ENCODE measurements at regions of chr7 and their contacts with region 1.

Region 1: GRCh38 chr7:100705753-100706671 is at the start of gene POP7:
- DNase-seq: peak; percentile 90
- ATAC-seq: peak; percentile 98
- H3K4me3 ChIP-seq: peak within 1 kb of the TSS; percentile 97
- H3K27ac ChIP-seq: peak within 1 kb of the TSS; percentile 93
- H3K4me1 ChIP-seq: peaks cover 13% of the 10 kb centered on the region
- H3K27me3 ChIP-seq: no peaks in the 10 kb centered on the region
- CTCF ChIP-seq: no peak
- EP300 ChIP-seq: no peak
- POLR2A ChIP-seq: peak; percentile 89
- RAD21 ChIP-seq: no peak
- polyA plus RNA-seq, gene POP7: 12.1 to 37.9 TPM

Region 2: GRCh38 chr7:100563809-100564400 is 142.1 kb before region 1 on chr7:
- CTCF ChIA-PET with region 1: interaction called, 13 read pairs
- POLR2A ChIA-PET with region 1: no interaction called
- RAD21 ChIA-PET with region 1: interaction called, 4 read pairs
- SMC1A ChIA-PET with region 1: interaction called, 4 read pairs
- in situ Hi-C with region 1: no loop called
- intact Hi-C with region 1: no loop called
- DNase-seq: no peak
- ATAC-seq: peak; percentile 84
- H3K4me3 ChIP-seq: no peak overlapping the region
- H3K27ac ChIP-seq: no peak overlapping the region
- H3K4me1 ChIP-seq: peaks cover 8% of the 10 kb centered on the region
- H3K27me3 ChIP-seq: no peaks in the 10 kb centered on the region
- CTCF ChIP-seq: peak; percentile 94 to 98 (median 97)
- EP300 ChIP-seq: no peak
- POLR2A ChIP-seq: peak; percentile 35
- RAD21 ChIP-seq: peak; percentile 71

Region 3: DNA sequence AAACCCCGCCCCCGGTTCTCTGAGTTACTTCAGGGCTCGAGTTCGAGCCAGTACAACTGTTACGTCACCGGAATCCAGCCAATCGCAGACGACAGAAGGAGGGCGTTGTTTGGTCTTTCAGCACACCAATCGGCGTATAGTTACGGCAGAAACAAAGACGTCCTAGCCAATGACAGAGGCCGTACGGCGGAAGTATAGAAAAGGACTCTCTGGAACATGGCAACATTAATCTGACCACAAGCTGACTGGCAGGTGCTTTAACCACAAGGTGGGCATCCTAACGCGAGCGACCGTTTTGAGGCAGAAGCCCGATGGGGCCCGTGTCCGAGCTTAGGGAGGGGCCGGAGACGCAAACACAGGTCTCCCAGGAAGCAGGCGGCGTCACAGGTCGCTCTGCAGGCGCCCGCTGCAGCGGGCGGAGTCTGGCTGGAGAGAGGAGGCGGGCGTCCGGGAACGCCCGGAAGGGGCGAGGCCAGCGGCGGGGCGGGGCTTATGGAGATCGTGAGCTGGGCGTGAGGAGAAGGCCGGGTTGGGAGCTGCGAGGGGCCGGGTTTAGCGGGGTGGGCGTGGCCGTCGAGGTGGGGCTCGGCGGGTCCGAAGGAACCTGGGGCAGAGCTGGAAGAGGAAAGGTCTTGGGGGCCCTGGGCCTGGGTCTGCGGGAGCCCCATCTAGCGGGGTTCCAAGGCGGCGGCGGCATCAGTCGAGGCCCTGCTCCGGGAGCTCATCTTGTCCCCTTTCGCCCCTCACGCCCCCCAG is 93.9 kb before region 1 on chr7 and contains the start of gene MOSPD3:
- CTCF ChIA-PET with region 1: interaction called, 16 read pairs
- POLR2A ChIA-PET with region 1: interaction called, 5 read pairs
- RAD21 ChIA-PET with region 1: interaction called, 15 read pairs
- SMC1A ChIA-PET with region 1: interaction called, 8 read pairs
- in situ Hi-C with region 1: no loop called
- intact Hi-C with region 1: no loop called
- DNase-seq: peak; percentile 99
- ATAC-seq: peak; percentile 98
- H3K4me3 ChIP-seq: peak within 1 kb of the TSS; percentile 75
- H3K27ac ChIP-seq: peak within 1 kb of the TSS; percentile 97
- H3K4me1 ChIP-seq: peaks cover 5% of the 10 kb centered on the region
- H3K27me3 ChIP-seq: peaks cover 0 to 3% of the 10 kb centered on the region in 2 experiments; a peak in 2 of 4 replicates
- CTCF ChIP-seq: no peak
- EP300 ChIP-seq: no peak
- POLR2A ChIP-seq: peak; percentile 90
- RAD21 ChIP-seq: no peak
- polyA plus RNA-seq, gene MOSPD3: 0.61 to 1.2 TPM

Region 4: DNA sequence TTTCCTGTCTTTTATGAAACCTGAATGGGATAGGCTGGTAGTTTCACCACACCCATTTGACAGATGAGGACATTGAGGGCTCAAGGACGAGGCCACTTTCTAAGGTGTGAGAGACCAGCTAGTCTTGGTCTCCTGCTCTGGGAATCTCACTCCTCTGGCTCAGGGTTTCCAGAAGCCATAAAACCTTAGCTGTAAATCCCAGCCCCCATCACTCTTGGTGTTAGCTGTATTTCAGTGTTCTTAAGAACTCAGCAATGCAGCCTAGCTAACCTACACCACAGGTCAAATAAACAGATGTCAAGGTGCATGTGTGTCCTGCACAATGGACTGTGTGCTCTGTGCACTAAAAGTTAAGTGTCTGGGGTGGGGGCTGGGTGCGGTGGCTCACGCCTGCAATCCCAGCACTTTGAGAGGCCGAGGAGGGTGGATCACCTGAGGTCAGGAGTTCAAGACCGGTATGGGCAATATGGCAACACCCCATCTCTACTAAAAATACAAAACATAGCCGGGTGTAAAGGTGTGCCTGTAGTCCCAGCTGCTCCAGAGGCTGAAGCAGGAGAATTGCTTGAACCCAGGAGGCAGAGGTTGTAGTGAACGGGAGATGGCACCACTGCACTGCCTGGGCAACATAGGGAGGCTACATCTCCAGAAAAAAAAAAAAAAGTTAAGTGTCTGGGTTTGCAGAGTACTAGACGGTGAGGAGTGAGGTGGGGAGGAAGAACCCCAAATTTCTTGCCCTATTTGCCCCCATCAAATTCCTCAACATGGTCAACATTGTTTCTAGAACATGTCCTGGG is 13.7 kb after region 1 on chr7:
- CTCF ChIA-PET with region 1: interaction called, 56 read pairs
- POLR2A ChIA-PET with region 1: no interaction called
- RAD21 ChIA-PET with region 1: interaction called, 21 read pairs
- SMC1A ChIA-PET with region 1: interaction called, 18 read pairs
- in situ Hi-C with region 1: no loop called
- intact Hi-C with region 1: no loop called
- DNase-seq: no peak
- ATAC-seq: no peak
- H3K4me3 ChIP-seq: no peak overlapping the region
- H3K27ac ChIP-seq: no peak overlapping the region
- H3K4me1 ChIP-seq: no peaks in the 10 kb centered on the region
- H3K27me3 ChIP-seq: peaks cover 4 to 11% of the 10 kb centered on the region in 2 experiments
- CTCF ChIP-seq: no peak
- EP300 ChIP-seq: no peak
- POLR2A ChIP-seq: no peak
- RAD21 ChIP-seq: no peak

Region 5: GRCh38 chr7:100803398-100804233 is 97.6 kb after region 1 on chr7:
- CTCF ChIA-PET with region 1: interaction called, 24 read pairs
- POLR2A ChIA-PET with region 1: interaction called, 11 read pairs
- RAD21 ChIA-PET with region 1: interaction called, 3 read pairs
- SMC1A ChIA-PET with region 1: interaction called, 4 read pairs
- in situ Hi-C with region 1: no loop called
- intact Hi-C with region 1: no loop called
- DNase-seq: peak; percentile 56
- ATAC-seq: peak; percentile 98
- H3K4me3 ChIP-seq: peak overlapping the region; percentile 53
- H3K27ac ChIP-seq: peak overlapping the region; percentile 80
- H3K4me1 ChIP-seq: peaks cover 15% of the 10 kb centered on the region
- H3K27me3 ChIP-seq: no peaks in the 10 kb centered on the region
- CTCF ChIP-seq: no peak
- EP300 ChIP-seq: no peak
- POLR2A ChIP-seq: peak; percentile 47; the same call in 1 of the 2 replicates
- RAD21 ChIP-seq: no peak